IMR-90 (cell line): ENCODE measurements at regions of chr5 and their contacts with region 1.

Region 1: DNA sequence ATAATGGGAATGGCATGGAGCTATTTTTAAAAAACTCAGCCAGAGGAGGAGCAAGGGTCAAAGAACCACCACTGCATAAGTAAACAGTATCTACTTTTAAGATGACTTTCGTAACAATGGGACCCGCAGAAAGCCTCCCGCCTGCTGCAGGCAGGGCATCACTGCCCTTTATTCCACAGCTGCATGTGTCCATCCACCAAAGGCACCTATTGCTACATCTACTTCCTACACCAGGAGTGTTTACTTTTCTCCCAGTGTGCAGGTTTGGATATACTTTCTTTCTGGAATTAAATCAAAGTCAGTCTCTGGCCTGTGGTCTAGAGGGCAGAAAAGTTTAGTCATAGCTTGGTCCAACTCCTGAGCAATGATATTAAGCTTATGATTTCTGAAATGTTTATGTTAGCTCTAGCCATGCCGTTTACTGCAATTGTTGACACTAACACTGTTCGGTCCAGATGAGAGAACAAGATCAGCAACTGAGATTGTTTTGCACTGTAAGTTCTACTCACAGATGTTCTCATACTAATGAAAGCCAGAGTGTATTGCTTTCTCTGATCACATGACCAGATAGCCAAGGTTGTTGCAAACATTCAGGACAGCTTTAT is 391.5 kb downstream of the FGF10 start:
- DNase-seq: peak; percentile 70
- ATAC-seq: peak; percentile 83
- H3K4me3 ChIP-seq: no peak overlapping the region
- H3K27ac ChIP-seq: peak overlapping the region; percentile 48; the same call in 1 of the 2 replicates
- H3K4me1 ChIP-seq: peaks cover 10% of the 10 kb centered on the region; the same call in 1 of the 2 replicates
- H3K27me3 ChIP-seq: no peaks in the 10 kb centered on the region
- CTCF ChIP-seq: no peak
- POLR2A ChIP-seq: no peak
- RAD21 ChIP-seq: no peak

Region 2: DNA sequence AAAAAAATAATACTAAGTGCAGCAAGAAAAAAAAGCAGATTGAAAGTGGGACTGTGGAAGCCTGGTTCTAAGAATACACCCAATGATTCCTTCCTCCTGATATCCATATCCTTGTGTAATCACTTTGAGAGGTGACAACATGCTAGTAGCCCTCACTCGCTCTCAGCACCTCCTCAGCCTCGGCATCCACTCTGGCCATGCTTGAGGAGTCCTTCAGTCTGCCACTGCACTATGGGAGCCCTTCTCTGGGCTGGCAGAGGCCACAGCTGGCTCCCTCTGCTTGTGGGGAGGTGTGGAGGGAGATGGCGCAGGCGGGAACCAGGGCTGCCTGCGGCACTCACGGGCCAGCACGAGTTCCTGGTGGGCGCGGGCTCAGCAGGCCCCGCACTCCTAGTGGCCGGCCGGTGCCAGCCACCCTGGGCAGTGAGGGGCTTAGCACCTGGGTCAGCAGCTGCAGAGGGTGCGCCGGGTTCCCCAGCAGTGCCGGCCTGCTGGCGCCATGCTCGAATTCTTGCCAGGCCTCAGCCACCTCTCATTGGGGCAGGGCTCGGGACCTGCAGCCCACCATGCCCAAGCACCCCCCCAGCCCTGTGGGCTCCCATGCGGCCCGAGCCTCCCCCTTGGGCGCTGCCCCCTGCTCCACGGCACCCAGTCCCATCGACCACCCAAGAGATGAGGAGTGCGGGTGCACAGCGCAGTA is 1161.5 kb before region 1 on chr5:
- CTCF ChIA-PET with region 1: no interaction called
- POLR2A ChIA-PET with region 1: no interaction called
- dilution Hi-C with region 1: no loop called
- in situ Hi-C with region 1: no loop called
- intact Hi-C with region 1: loop called (anchors 10 kb)
- DNase-seq: no peak
- ATAC-seq: no peak
- H3K4me3 ChIP-seq: no peak overlapping the region
- H3K27ac ChIP-seq: no peak overlapping the region
- H3K4me1 ChIP-seq: peaks cover 4% of the 10 kb centered on the region; the same call in 1 of the 2 replicates
- H3K27me3 ChIP-seq: no peaks in the 10 kb centered on the region
- CTCF ChIP-seq: no peak
- POLR2A ChIP-seq: no peak
- RAD21 ChIP-seq: no peak

Region 3: DNA sequence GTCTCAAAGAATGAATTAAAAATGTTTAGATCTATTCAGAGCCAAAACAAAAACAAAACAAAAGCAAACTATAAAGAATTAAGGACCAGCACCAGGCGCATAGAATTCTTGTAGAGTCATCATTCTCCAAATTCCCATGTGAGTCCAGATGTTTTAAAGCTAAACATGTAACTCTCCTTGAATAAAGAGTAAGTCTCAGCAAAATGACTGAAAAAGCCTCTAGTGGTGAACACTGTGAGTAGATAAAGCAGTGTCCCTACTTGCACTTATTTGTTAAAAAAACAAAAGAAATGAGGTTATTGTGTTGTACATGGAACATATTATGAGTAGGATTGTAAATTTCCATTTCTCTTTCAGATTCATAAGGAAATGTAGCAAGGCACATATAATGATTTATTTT is 350.8 kb before region 1 on chr5:
- CTCF ChIA-PET with region 1: no interaction called
- POLR2A ChIA-PET with region 1: no interaction called
- dilution Hi-C with region 1: no loop called
- in situ Hi-C with region 1: no loop called
- intact Hi-C with region 1: loop called (anchors 10 kb)
- DNase-seq: peak; percentile 57
- ATAC-seq: peak; percentile 47
- H3K4me3 ChIP-seq: no peak overlapping the region
- H3K27ac ChIP-seq: no peak overlapping the region
- H3K4me1 ChIP-seq: peaks cover 14% of the 10 kb centered on the region
- H3K27me3 ChIP-seq: no peaks in the 10 kb centered on the region
- CTCF ChIP-seq: peak; percentile 17; the same call in 1 of the 2 replicates
- POLR2A ChIP-seq: no peak
- RAD21 ChIP-seq: no peak

Region 4: GRCh38 chr5:43772764-43773477 is 224.8 kb before region 1 on chr5:
- CTCF ChIA-PET with region 1: no interaction called
- POLR2A ChIA-PET with region 1: no interaction called
- dilution Hi-C with region 1: no loop called
- in situ Hi-C with region 1: no loop called
- intact Hi-C with region 1: loop called (anchors 5 kb)
- DNase-seq: peak; percentile 73
- ATAC-seq: peak; percentile 21; the same call in 1 of the 2 replicates
- H3K4me3 ChIP-seq: no peak overlapping the region
- H3K27ac ChIP-seq: peak overlapping the region; percentile 91
- H3K4me1 ChIP-seq: peaks cover 8% of the 10 kb centered on the region
- H3K27me3 ChIP-seq: no peaks in the 10 kb centered on the region
- CTCF ChIP-seq: no peak
- POLR2A ChIP-seq: no peak
- RAD21 ChIP-seq: no peak

Region 5: DNA sequence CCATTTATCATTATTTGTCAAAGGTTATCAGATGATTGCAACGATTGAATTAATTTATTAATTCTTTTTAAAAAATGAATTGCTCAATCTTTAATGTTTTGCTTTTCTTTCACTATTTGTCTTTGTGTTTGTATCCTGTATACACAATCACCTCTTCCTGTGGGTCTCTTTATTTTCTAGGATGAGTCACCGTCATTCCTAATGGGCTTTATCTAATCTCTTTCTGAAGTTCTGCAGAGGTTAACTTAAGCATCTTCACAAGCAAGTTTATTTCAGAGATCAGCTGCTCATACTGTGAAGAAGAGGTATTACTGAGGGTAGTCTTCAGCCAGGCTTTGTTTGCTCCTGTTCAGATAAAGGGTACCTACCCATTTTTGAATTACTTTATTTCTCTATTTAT is 70.8 kb before region 1 on chr5:
- CTCF ChIA-PET with region 1: no interaction called
- POLR2A ChIA-PET with region 1: no interaction called
- dilution Hi-C with region 1: no loop called
- in situ Hi-C with region 1: no loop called
- intact Hi-C with region 1: no loop called
- DNase-seq: no peak
- ATAC-seq: no peak
- H3K4me3 ChIP-seq: no peak overlapping the region
- H3K27ac ChIP-seq: no peak overlapping the region
- H3K4me1 ChIP-seq: no peaks in the 10 kb centered on the region
- H3K27me3 ChIP-seq: no peaks in the 10 kb centered on the region
- CTCF ChIP-seq: no peak
- POLR2A ChIP-seq: no peak
- RAD21 ChIP-seq: no peak